MCF 10A (cell line): ENCODE measurements at regions of chr1 and their contacts with region 1.

Region 1: DNA sequence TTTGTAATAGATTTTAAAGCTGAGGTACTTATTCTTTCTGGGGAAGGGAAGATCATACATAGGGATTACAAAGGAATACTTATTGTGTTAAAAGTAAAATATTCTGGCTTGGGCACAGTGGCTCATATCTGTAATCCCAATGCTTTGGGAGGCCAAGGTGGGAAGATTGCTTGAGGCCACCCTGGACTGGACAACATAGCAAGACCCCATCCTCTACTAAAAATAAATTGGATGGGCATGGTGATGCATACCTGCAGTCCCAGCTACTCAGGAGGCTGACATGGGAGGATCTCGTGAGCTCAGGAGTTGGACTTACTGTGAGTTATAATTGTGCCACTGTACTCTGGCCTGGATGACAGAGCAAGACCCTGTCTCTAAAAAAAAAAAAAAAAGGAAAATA is 27.6 kb downstream of the GABPB2 start:
- DNase-seq: no peak
- H3K4me3 Mint-ChIP-seq: no peak overlapping the region
- H3K27ac Mint-ChIP-seq: no peak overlapping the region
- H3K4me1 Mint-ChIP-seq: peaks cover 10% of the 10 kb centered on the region
- H3K27me3 Mint-ChIP-seq: no peaks in the 10 kb centered on the region
- CTCF ChIP-seq: no peak

Region 2: GRCh38 chr1:150960646-150961045 is 137.5 kb before region 1 on chr1:
- CTCF ChIA-PET with region 1: no interaction called
- POLR2A ChIA-PET with region 1: no interaction called
- intact Hi-C with region 1: no loop called
- DNase-seq: no peak
- H3K4me3 Mint-ChIP-seq: no peak overlapping the region
- H3K27ac Mint-ChIP-seq: no peak overlapping the region
- H3K4me1 Mint-ChIP-seq: no peaks in the 10 kb centered on the region
- H3K27me3 Mint-ChIP-seq: no peaks in the 10 kb centered on the region
- CTCF ChIP-seq: no peak

Region 3: GRCh38 chr1:151085953-151086559 is 12.1 kb before region 1 on chr1:
- CTCF ChIA-PET with region 1: interaction called, 37 read pairs
- POLR2A ChIA-PET with region 1: interaction called, 5 read pairs
- intact Hi-C with region 1: no loop called
- DNase-seq: no peak
- H3K4me3 Mint-ChIP-seq: no peak overlapping the region
- H3K27ac Mint-ChIP-seq: no peak overlapping the region
- H3K4me1 Mint-ChIP-seq: no peaks in the 10 kb centered on the region
- H3K27me3 Mint-ChIP-seq: no peaks in the 10 kb centered on the region
- CTCF ChIP-seq: no peak

Region 4: DNA sequence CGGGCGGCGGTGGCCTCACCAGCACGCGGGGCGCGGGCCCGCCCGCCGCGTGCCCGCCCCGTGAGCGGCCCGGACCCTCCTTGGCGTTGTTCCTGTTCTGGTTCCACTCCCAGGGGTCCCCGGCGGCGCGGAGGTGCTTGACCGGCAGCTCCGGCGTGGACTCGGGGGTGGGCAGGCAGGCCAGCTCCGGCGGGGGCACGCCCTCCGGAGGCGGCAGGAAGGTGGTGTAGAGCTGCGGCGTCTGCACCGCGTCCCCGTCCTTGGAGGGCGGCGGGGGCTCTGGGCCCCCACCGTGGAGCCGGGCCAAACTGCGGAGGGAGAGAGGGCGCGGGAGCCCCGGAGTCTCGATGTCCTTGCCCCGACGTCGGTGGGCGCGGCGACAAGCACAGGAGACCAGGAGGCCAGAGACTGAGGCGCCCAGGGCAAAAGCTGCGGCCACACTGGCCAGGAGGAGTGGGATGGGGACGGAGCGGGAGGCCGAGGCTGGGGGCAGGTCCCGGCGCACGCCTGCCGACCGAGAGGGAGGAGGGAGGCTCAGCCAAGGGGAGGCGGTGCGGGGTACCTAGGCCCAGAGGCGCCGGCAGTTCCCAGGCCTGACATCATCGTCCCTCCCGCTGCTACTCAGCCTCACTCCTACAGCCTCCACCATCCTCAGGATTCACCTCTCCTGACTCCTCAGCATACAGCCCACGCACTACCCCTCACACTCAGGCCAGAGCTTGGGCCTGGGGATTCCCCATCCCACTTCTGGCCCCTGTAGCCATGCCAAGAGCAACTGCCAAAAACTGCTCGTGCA is 35.1 kb after region 1 on chr1:
- CTCF ChIA-PET with region 1: interaction called, 11 read pairs
- POLR2A ChIA-PET with region 1: no interaction called
- intact Hi-C with region 1: no loop called
- DNase-seq: no peak
- H3K4me3 Mint-ChIP-seq: no peak overlapping the region
- H3K27ac Mint-ChIP-seq: no peak overlapping the region
- H3K4me1 Mint-ChIP-seq: no peaks in the 10 kb centered on the region
- H3K27me3 Mint-ChIP-seq: no peaks in the 10 kb centered on the region
- CTCF ChIP-seq: no peak

Region 5: GRCh38 chr1:151156515-151156819 is 58.3 kb after region 1 on chr1 and contains the start of gene TNFAIP8L2:
- CTCF ChIA-PET with region 1: interaction called, 158 read pairs
- POLR2A ChIA-PET with region 1: interaction called, 10 read pairs
- intact Hi-C with region 1: loop called (anchors 1 kb)
- DNase-seq: no peak
- H3K4me3 Mint-ChIP-seq: no peak within 1 kb of the TSS
- H3K27ac Mint-ChIP-seq: no peak within 1 kb of the TSS
- H3K4me1 Mint-ChIP-seq: peaks cover 12% of the 10 kb centered on the region
- H3K27me3 Mint-ChIP-seq: no peaks in the 10 kb centered on the region
- CTCF ChIP-seq: no peak
- total RNA-seq, gene TNFAIP8L2: not detected in 2 replicates

Region 6: GRCh38 chr1:151391079-151391563 is 293.0 kb after region 1 on chr1:
- CTCF ChIA-PET with region 1: no interaction called
- POLR2A ChIA-PET with region 1: no interaction called
- intact Hi-C with region 1: no loop called
- DNase-seq: no peak
- H3K4me3 Mint-ChIP-seq: no peak overlapping the region
- H3K27ac Mint-ChIP-seq: no peak overlapping the region
- H3K4me1 Mint-ChIP-seq: no peaks in the 10 kb centered on the region
- H3K27me3 Mint-ChIP-seq: no peaks in the 10 kb centered on the region
- CTCF ChIP-seq: no peak